ENCODE measurements at regions of chr13 and their contacts with region 1.

Region 1: DNA sequence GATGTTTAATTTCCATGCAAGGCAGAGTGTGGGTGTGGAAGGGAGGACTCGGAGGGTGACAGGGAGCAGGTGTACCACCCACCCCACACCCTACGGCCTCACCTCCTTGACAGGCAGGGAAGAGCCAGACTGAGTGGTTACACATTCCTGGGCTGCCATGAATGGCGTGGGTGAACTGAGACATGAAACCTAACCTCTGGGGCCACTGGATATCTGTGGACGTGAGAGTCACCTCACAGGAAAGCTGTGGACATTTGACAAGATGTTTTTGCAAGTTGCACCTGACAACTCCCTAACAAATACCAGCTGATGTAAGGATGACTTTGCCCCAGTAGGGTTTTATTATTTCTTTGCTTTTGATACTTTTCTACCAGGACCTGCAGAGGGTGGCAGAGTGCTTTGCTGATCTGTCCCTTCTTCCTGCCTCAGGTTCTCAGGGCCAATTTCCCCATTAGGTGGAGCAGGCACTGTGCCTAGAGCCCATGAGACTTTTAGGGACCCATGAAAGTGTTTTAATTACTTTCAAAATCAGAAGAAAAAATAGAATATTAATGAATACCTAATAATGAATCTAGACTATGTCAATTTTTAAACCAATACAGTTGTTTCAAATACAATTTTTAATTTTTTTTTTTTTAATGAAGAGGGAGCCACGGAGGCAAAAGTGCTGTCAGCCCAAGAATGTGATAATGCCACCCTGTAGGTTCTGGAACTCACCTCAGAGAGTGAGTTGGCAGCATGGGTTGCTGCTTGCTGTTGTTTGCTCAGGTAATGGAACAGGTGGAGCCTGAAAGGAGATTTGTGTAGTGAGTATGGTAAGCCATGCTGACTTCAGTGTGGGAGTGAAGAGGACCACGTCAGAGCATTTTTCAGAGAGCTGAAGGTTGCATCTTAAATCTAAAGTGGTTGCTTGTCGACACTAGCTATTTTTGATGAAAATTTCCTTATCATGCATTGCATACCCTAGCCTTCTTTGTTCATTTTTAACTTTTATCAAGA is 58.0 kb upstream of the CYSLTR2 start:
- DNase-seq: peak in 2 of 3 donors; percentile 56 to 75
- ATAC-seq: peak; percentile 95
- H3K4me3 ChIP-seq: no peak overlapping the region
- H3K4me1 ChIP-seq: peaks cover 3% of the 10 kb centered on the region
- CTCF ChIP-seq: peak; percentile 40

Region 2: DNA sequence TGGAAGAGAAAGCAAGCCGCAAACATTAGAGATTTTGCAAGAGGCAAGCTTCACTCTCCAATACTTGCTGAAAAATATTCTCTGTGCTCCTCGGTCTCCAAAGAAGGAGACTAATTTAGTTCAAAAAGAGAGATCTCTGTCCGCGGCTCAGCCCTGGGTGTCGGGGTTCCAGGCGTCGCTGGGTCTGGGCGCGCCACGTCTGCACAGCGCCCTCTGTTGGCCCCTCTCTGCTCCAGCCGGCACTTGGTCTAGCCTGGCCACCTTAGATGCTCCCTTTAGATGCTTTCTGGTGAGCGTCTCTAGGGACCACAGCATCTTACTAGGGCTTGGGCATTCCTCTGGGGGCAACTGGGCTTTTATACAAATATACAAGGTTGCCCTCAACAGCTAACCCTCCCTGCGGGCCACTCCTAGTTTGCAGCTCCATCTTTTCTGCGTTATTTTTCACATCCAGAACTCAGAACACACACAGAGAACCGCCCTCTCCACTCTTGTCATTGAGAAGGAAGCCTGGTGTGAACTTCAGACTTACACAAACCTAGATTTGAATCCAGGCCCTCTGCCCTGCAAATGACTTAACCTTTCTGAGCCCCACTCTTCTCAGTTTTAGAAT is 136.3 kb after region 1 on chr13:
- intact Hi-C with region 1: loop called in 1 of 2 experiments (anchors 10 kb)
- DNase-seq: peak; percentile 55 to 70 (median 68)
- ATAC-seq: peak; percentile 86
- H3K4me3 ChIP-seq: no peak overlapping the region
- H3K4me1 ChIP-seq: no peaks in the 10 kb centered on the region
- CTCF ChIP-seq: peak; percentile 55

Region 3: DNA sequence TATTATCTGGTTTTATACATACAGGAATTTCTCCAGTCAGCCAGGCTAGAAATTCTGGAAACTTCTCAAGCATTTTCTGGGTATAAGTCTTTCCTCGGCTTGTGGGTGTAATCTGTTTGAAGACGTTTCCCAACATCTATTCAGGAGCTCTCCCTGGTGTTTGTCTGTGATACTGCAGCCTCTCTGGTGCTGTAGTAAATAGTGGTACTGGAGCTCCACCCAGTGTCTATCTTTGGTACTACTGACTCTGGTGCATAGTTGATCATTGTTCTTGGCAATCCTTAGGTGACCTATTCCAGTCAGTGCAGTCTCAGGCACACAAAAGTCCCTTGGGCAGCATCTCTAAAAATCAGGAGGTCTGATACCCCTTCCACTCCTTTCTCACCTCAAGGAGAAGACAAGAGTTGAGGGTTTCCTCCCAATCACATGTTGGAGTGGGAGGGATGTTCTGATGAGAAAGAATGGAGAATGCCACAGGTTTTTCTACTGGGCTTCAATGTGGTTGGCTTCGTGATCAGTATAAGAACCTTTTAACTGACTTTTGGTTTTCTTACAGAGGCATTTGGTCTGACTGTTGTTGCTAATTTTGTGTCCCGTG is 173.5 kb after region 1 on chr13:
- intact Hi-C with region 1: loop called (anchors 10 kb)
- DNase-seq: peak in 2 of 3 donors; percentile 35 to 99
- ATAC-seq: peak; percentile 100
- H3K4me3 ChIP-seq: no peak overlapping the region
- H3K4me1 ChIP-seq: peaks cover 4% of the 10 kb centered on the region
- CTCF ChIP-seq: peak; percentile 97

Region 4: DNA sequence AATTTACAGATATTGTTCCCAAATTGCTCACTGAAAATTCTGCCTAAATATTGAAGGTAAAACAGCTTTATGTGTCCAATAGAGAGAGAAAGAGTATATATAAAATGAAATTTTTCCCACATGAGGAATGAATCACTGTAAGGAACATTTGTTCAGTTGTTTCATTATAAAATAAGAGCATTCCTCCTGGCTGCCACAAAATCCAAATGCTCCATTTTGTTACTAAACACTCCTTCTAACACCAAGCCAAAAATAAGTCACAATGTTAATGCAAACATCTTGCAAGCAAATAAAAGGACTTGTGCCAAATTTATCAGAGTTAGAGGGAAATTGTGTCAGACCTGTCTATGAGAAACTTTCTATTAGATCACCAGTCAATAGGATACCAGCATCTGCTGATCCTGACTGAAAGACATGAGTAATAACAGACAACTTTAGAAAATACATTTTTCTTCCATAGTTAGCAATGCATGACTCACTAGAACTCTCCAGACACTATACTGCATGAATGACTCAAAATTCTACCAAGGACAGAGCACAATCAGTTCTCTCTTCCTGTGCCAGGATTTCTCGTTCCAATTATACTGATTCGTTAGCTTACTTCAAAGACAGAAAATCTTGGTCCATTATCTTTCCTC is 296.4 kb after region 1 on chr13:
- intact Hi-C with region 1: no loop called
- DNase-seq: no peak
- ATAC-seq: peak; percentile 25
- H3K4me3 ChIP-seq: no peak overlapping the region
- H3K4me1 ChIP-seq: no peaks in the 10 kb centered on the region
- CTCF ChIP-seq: no peak

Measured in mucosa of descending colon (tissue), 3 donors.